Naive thymus-derived CD4-positive, alpha-beta T cell (primary cell): ENCODE measurements at regions of chr7 and their contacts with region 1.

Region 1: DNA sequence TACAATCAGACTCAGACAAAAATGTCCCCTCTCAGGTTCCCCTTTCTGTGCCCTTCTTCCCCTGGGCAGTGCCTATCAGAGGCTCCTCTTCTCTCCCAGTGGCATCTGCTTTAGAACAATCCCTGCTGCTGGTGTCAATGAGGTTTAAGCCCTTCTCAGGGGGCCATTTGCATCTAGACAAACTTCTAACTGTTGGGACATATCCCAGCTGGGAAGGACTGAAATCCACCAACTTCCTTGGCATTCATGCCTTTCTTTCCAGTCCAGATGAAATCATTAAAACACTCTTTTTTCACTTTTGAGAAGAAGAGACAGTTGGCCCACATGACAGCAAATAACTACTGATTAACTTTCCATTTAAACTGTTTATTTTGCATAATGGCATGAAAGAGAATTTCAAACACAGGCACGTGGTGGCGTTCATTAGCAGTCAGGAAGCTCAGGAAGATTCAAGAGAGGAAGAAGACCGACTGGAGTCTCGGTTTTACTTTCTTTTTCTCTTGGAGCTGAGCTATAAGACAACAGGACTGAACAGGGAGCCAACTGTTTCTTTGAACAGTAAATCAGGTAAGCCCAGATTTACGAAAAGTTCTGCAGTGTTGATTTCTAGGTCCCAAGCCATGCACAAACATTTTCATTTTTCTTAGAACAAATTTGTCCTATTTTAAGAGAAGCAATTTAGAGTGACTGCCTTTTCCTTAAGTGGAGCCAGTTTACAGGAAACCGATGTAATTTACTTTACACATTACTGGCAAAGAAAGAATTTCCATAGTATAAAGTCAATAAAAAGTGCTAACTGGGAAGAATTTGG is at the start of gene GIMAP2:
- DNase-seq: peak in 7 of 9 donors; percentile 40 to 73 (median 65)
- ATAC-seq: peak; percentile 90
- H3K4me3 ChIP-seq: peak within 1 kb of the TSS; percentile 97
- H3K4me3 Mint-ChIP-seq: peak within 1 kb of the TSS; percentile 88 to 100 (median 98)
- H3K27ac ChIP-seq: peak within 1 kb of the TSS; percentile 78
- H3K27ac Mint-ChIP-seq: peak within 1 kb of the TSS; percentile 91 to 100 (median 97)
- H3K4me1 ChIP-seq: peaks cover 49 to 53% of the 10 kb centered on the region in 2 donors
- H3K4me1 Mint-ChIP-seq: peaks cover 50 to 87% (median 81%) of the 10 kb centered on the region in 7 donors
- H3K27me3 ChIP-seq: no peaks in the 10 kb centered on the region
- H3K27me3 Mint-ChIP-seq: no peaks in the 10 kb centered on the region
- total RNA-seq, gene GIMAP2: 79.4 to 286 (median 122) TPM

Region 2: DNA sequence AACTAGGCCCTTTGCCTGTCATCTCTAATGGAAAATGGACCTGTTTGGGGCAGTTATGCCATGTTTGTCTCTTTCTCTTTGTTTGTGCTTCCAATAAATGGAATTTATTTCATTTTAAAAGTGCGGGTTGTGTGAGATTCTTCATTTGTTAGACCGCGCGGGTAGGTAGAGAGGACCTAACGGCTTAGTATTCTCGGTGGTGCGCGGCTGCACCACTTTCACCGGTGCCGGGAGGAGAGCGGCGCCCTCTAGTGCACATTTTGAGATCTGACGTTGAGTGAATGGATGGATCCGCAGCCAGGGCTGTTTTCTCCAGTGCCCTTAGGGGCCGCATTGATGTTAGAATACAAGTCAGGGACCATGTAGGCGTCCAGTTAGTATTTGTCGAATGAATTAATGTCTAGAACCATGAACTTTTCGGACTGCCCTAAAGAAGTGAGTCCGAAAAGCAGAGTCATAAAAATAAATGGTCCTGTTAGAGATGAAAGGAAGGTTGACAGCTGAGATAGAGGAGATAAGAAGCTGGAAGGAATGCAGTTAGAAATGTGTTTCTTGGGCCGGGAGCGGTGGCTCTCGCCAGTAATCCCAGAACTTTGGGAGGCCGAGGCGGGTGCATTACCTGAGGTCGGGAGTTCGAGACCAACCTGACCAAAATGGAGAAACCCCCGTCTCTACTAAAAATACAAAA is 264.3 kb before region 1 on chr7:
- CTCF ChIA-PET with region 1: no interaction called
- POLR2A ChIA-PET with region 1: no interaction called
- intact Hi-C with region 1: no loop called
- DNase-seq: peak; percentile 65 to 87 (median 81)
- ATAC-seq: peak; percentile 99
- H3K4me3 ChIP-seq: no peak overlapping the region
- H3K4me3 Mint-ChIP-seq: peak overlapping the region; percentile 16 to 75 (median 52)
- H3K27ac ChIP-seq: no peak overlapping the region
- H3K27ac Mint-ChIP-seq: peak overlapping the region in 7 of 9 donors; percentile 18 to 78 (median 45)
- H3K4me1 ChIP-seq: peaks cover 3 to 4% of the 10 kb centered on the region in 2 donors
- H3K4me1 Mint-ChIP-seq: peaks cover 5 to 17% (median 8%) of the 10 kb centered on the region in 7 donors
- H3K27me3 ChIP-seq: no peaks in the 10 kb centered on the region
- H3K27me3 Mint-ChIP-seq: peaks cover 0 to 6% (median 0%) of the 10 kb centered on the region in 5 donors

Region 3: DNA sequence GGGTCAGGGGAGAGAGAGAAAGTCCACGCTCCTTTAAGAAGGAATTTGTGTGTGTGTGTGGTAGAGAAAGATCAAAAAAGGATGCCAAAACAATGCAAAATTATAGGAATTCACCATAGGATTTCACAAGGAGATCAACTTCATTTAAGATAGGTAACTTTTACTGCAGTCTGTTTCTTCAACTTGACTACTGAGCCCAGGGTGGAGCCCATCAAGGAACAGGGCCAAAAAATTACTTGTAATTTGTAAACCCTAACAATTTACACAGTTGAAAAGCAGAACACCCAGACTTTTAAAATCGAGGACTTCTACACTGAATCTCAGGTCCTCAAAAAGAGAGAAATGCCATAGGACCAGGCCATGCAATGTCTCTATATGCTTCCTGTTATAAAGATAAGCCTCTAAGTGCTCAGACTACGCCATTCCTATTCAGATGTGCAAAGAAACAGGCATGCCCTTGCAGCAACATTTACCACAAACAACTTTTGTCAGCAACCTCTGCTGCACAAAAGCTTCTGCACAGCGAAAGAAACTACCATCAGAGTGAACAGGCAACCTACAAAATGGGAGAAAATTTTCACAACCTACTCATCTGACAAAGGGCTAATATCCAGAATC is 128.8 kb before region 1 on chr7:
- CTCF ChIA-PET with region 1: interaction called, 3 read pairs
- POLR2A ChIA-PET with region 1: interaction called, 10 read pairs
- intact Hi-C with region 1: no loop called
- DNase-seq: peak in 7 of 9 donors; percentile 45 to 84 (median 73)
- ATAC-seq: peak; percentile 99
- H3K4me3 ChIP-seq: peak overlapping the region; percentile 42
- H3K4me3 Mint-ChIP-seq: peak overlapping the region; percentile 48 to 92 (median 78)
- H3K27ac ChIP-seq: peak overlapping the region; percentile 66
- H3K27ac Mint-ChIP-seq: peak overlapping the region; percentile 89 to 99 (median 94)
- H3K4me1 ChIP-seq: peaks cover 47 to 74% of the 10 kb centered on the region in 2 donors
- H3K4me1 Mint-ChIP-seq: peaks cover 45 to 95% (median 90%) of the 10 kb centered on the region in 7 donors
- H3K27me3 ChIP-seq: no peaks in the 10 kb centered on the region
- H3K27me3 Mint-ChIP-seq: no peaks in the 10 kb centered on the region

Region 4: DNA sequence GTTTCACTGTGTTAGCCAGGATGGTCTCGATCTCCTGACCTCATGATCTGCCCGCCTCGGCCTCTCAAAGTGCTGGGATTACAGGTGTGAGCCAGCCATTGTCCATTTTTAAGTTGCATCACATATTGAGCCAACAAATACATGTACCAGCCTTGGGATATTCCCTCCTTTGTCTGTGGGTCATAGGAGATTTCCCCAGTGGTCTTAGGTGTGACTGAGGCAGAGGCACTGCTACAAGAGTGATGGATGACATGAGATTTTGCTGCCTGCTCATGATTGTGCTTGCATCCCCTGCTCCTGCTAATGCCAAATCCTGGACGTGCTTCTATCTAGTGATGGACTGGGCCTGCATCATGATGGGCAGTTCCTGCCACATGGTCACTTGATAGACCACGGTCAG is 42.5 kb before region 1 on chr7:
- CTCF ChIA-PET with region 1: interaction called, 4 read pairs
- POLR2A ChIA-PET with region 1: interaction called, 16 read pairs
- intact Hi-C with region 1: no loop called
- DNase-seq: no peak
- ATAC-seq: no peak
- H3K4me3 ChIP-seq: no peak overlapping the region
- H3K4me3 Mint-ChIP-seq: peak overlapping the region in 1 of 10 donors; percentile 7
- H3K27ac ChIP-seq: no peak overlapping the region
- H3K27ac Mint-ChIP-seq: peak overlapping the region in 4 of 9 donors; percentile 23 to 88 (median 54)
- H3K4me1 ChIP-seq: peaks cover 7 to 47% of the 10 kb centered on the region in 2 donors
- H3K4me1 Mint-ChIP-seq: peaks cover 19 to 88% (median 74%) of the 10 kb centered on the region in 7 donors
- H3K27me3 ChIP-seq: no peaks in the 10 kb centered on the region
- H3K27me3 Mint-ChIP-seq: no peaks in the 10 kb centered on the region

Region 5: DNA sequence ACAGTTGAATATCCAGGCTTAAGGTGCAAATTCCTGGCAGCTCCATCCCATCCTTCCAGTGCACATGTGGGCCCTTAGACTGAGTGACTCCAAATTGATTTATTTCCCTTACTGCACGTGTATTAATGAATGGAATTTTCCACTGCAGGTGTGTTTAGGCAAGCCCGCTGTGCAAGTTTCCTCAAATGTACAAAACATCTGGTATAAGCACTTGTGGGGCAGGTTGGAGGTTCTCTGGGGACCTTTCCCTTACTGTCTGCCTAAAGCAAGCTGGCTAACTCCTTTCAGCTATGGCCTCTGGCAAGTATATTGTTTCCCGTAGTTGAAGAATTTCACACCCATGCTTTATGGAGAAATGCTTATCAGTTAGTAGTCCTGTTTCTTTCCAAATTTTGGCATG is 27.9 kb before region 1 on chr7:
- CTCF ChIA-PET with region 1: no interaction called
- POLR2A ChIA-PET with region 1: interaction called, 12 read pairs
- intact Hi-C with region 1: no loop called
- DNase-seq: no peak
- ATAC-seq: no peak
- H3K4me3 ChIP-seq: no peak overlapping the region
- H3K4me3 Mint-ChIP-seq: no peak overlapping the region
- H3K27ac ChIP-seq: no peak overlapping the region
- H3K27ac Mint-ChIP-seq: peak overlapping the region in 3 of 9 donors; percentile 6 to 78 (median 20)
- H3K4me1 ChIP-seq: peaks cover 16 to 17% of the 10 kb centered on the region in 2 donors
- H3K4me1 Mint-ChIP-seq: peaks cover 22 to 57% (median 42%) of the 10 kb centered on the region in 7 donors
- H3K27me3 ChIP-seq: no peaks in the 10 kb centered on the region
- H3K27me3 Mint-ChIP-seq: no peaks in the 10 kb centered on the region

Region 6: GRCh38 chr7:150668472-150668911 is 16.9 kb before region 1 on chr7:
- CTCF ChIA-PET with region 1: interaction called, 5 read pairs
- POLR2A ChIA-PET with region 1: interaction called, 85 read pairs
- intact Hi-C with region 1: loop called (anchors 1 kb)
- DNase-seq: peak in 8 of 9 donors; percentile 66 to 87 (median 81)
- ATAC-seq: peak; percentile 88
- H3K4me3 ChIP-seq: peak overlapping the region; percentile 30
- H3K4me3 Mint-ChIP-seq: peak overlapping the region; percentile 57 to 85 (median 72)
- H3K27ac ChIP-seq: peak overlapping the region; percentile 78
- H3K27ac Mint-ChIP-seq: peak overlapping the region; percentile 73 to 100 (median 97)
- H3K4me1 ChIP-seq: peaks cover 71 to 86% of the 10 kb centered on the region in 2 donors
- H3K4me1 Mint-ChIP-seq: peaks cover 58 to 99% (median 94%) of the 10 kb centered on the region in 7 donors
- H3K27me3 ChIP-seq: no peaks in the 10 kb centered on the region
- H3K27me3 Mint-ChIP-seq: no peaks in the 10 kb centered on the region

Region 7: GRCh38 chr7:150695654-150696053 is 10.2 kb after region 1 on chr7:
- CTCF ChIA-PET with region 1: interaction called, 5 read pairs
- POLR2A ChIA-PET with region 1: interaction called, 32 read pairs
- intact Hi-C with region 1: loop called in 1 of 2 experiments (anchors 1 kb)
- DNase-seq: no peak
- ATAC-seq: no peak
- H3K4me3 ChIP-seq: no peak overlapping the region
- H3K4me3 Mint-ChIP-seq: no peak overlapping the region
- H3K27ac ChIP-seq: no peak overlapping the region
- H3K27ac Mint-ChIP-seq: peak overlapping the region in 1 of 9 donors; percentile 26
- H3K4me1 ChIP-seq: peaks cover 0 to 3% of the 10 kb centered on the region in 2 donors
- H3K4me1 Mint-ChIP-seq: peaks cover 0 to 25% (median 13%) of the 10 kb centered on the region in 7 donors
- H3K27me3 ChIP-seq: no peaks in the 10 kb centered on the region
- H3K27me3 Mint-ChIP-seq: no peaks in the 10 kb centered on the region

Region 8: GRCh38 chr7:150703209-150703608 is 17.8 kb after region 1 on chr7:
- CTCF ChIA-PET with region 1: interaction called, 5 read pairs
- POLR2A ChIA-PET with region 1: interaction called, 21 read pairs
- intact Hi-C with region 1: loop called in 1 of 2 experiments (anchors 1 kb)
- DNase-seq: no peak
- ATAC-seq: no peak
- H3K4me3 ChIP-seq: no peak overlapping the region
- H3K4me3 Mint-ChIP-seq: no peak overlapping the region
- H3K27ac ChIP-seq: no peak overlapping the region
- H3K27ac Mint-ChIP-seq: peak overlapping the region in 1 of 9 donors; percentile 32
- H3K4me1 ChIP-seq: no peaks in the 10 kb centered on the region
- H3K4me1 Mint-ChIP-seq: peaks cover 4 to 12% (median 9%) of the 10 kb centered on the region in 7 donors
- H3K27me3 ChIP-seq: no peaks in the 10 kb centered on the region
- H3K27me3 Mint-ChIP-seq: no peaks in the 10 kb centered on the region